ENCODE measurements at regions of chr9 and their contacts with region 1.

Region 1: GRCh38 chr9:135085830-135086546 is 1.5 kb upstream of the OLFM1 start:
- DNase-seq: peak; percentile 95
- H3K4me3 ChIP-seq: peak overlapping the region; percentile 56 to 67 (median 57)
- H3K27ac ChIP-seq: peak overlapping the region; percentile 43 to 57 (median 50)
- H3K4me1 ChIP-seq: peaks cover 19 to 51% (median 49%) of the 10 kb centered on the region in 4 donors
- H3K27me3 ChIP-seq: peaks cover 0 to 78% (median 16%) of the 10 kb centered on the region in 4 donors
- CTCF ChIP-seq: peak; percentile 96 to 98 (median 97)
- EP300 ChIP-seq: no peak
- POLR2A ChIP-seq: no peak

Region 2: DNA sequence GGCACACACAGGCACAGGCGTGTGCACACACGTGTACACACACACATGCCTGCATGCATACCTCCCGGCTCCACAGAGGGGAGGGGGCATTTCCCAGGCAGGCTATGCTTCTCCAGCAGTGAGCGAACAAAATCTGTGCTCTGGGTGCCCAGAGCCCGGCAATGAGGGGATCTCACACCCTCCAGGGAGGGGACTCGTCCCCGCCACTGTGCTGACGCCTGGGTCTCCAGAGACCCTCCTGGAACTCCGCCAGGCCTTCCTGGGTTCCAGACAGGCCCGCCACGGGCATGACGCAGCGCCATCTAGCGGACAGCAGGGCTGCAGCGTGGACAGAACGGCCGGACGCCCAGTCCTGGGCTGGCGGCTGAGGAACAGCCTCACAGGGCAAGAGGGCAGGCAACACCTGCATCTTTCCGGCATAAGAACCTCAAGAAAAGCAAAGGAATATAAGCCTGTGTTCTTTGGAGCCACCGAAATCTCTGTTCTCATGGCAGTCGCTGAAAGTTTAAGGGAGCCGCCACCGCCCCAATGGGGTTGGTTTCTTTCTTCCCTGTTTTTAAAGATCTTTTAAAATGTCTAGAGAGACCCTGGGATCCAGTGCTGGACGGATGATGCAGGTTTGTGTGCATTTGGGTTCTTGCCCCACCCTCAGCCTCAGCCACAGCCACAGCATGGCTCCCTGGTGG is 258.0 kb after region 1 on chr9:
- intact Hi-C with region 1: loop called (anchors 2 kb)
- DNase-seq: no peak
- H3K4me3 ChIP-seq: no peak overlapping the region
- H3K27ac ChIP-seq: no peak overlapping the region
- H3K4me1 ChIP-seq: peaks cover 3 to 41% (median 32%) of the 10 kb centered on the region in 4 donors
- H3K27me3 ChIP-seq: peaks cover 0 to 97% (median 2%) of the 10 kb centered on the region in 4 donors
- CTCF ChIP-seq: peak; percentile 68 to 88 (median 84)
- EP300 ChIP-seq: no peak
- POLR2A ChIP-seq: no peak

Region 3: GRCh38 chr9:135410831-135411473 is 325.0 kb after region 1 on chr9:
- intact Hi-C with region 1: loop called (anchors 1 kb)
- DNase-seq: no peak
- H3K4me3 ChIP-seq: no peak overlapping the region
- H3K27ac ChIP-seq: no peak overlapping the region
- H3K4me1 ChIP-seq: peaks cover 0 to 9% (median 6%) of the 10 kb centered on the region in 4 donors
- H3K27me3 ChIP-seq: peaks cover 0 to 65% (median 0%) of the 10 kb centered on the region in 4 donors
- CTCF ChIP-seq: no peak
- EP300 ChIP-seq: no peak
- POLR2A ChIP-seq: no peak

Measured in esophagus muscularis mucosa (tissue), 4 donors.